ENCODE measurements at regions of chr5 and their contacts with region 1.

Region 1: GRCh38 chr5:91397791-91398190 is 14.7 kb upstream of the ARRDC3 start:
- DNase-seq: no peak
- H3K4me3 ChIP-seq: no peak overlapping the region
- H3K27ac ChIP-seq: no peak overlapping the region
- H3K4me1 ChIP-seq: no peaks in the 10 kb centered on the region
- H3K27me3 ChIP-seq: no peaks in the 10 kb centered on the region
- CTCF ChIP-seq: no peak
- POLR2A ChIP-seq: no peak

Region 2: GRCh38 chr5:90854169-90854568 is 543.6 kb before region 1 on chr5:
- intact Hi-C with region 1: loop called in 1 of 2 experiments (anchors 10 kb)
- DNase-seq: no peak
- H3K4me3 ChIP-seq: no peak overlapping the region
- H3K27ac ChIP-seq: no peak overlapping the region
- H3K4me1 ChIP-seq: no peaks in the 10 kb centered on the region
- H3K27me3 ChIP-seq: no peaks in the 10 kb centered on the region
- CTCF ChIP-seq: no peak
- POLR2A ChIP-seq: no peak

Region 3: GRCh38 chr5:91266184-91266705 is 131.5 kb before region 1 on chr5:
- intact Hi-C with region 1: no loop called
- DNase-seq: no peak
- H3K4me3 ChIP-seq: peak overlapping the region in 1 of 4 donors; percentile 20
- H3K27ac ChIP-seq: no peak overlapping the region
- H3K4me1 ChIP-seq: peaks cover 10 to 12% of the 10 kb centered on the region in 2 donors
- H3K27me3 ChIP-seq: no peaks in the 10 kb centered on the region
- CTCF ChIP-seq: peak; percentile 21 to 57 (median 36)
- POLR2A ChIP-seq: no peak